ENCODE measurements at regions of chr16 and their contacts with region 1.

Region 1: DNA sequence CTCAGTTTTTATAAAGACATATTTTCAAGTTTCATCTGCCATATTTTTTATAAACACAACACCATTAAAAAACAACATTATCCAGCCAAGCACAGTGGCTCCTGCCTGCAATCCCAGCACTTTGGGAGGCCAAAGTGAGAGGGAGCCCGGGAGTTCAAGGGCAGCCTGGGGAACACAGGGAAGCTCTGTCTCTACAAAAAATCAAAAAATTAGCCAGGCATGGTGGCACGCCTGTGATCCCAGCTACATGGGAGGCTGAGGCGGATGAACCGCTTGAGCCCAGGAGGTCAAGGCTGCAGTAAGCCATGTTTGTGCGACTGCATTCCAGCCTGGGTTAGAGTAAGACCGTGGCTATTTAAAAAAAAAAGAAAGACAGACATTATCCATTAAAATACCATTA is 17.2 kb upstream of the NTAN1 start:
- DNase-seq: no peak
- H3K4me3 ChIP-seq: no peak overlapping the region
- H3K27ac ChIP-seq: no peak overlapping the region
- H3K27me3 ChIP-seq: no peaks in the 10 kb centered on the region
- CTCF ChIP-seq: no peak

Region 2: GRCh38 chr16:15057611-15058417 is 15.3 kb before region 1 on chr16:
- CTCF ChIA-PET with region 1: interaction called, 12 read pairs
- POLR2A ChIA-PET with region 1: no interaction called
- DNase-seq: no peak
- H3K4me3 ChIP-seq: no peak overlapping the region
- H3K27ac ChIP-seq: no peak overlapping the region
- H3K27me3 ChIP-seq: no peaks in the 10 kb centered on the region
- CTCF ChIP-seq: no peak

Measured in AG04450 (cell line).